Lower leg skin (tissue), 4 donors: ENCODE measurements at regions of chr1 and their contacts with region 1.

Region 1: DNA sequence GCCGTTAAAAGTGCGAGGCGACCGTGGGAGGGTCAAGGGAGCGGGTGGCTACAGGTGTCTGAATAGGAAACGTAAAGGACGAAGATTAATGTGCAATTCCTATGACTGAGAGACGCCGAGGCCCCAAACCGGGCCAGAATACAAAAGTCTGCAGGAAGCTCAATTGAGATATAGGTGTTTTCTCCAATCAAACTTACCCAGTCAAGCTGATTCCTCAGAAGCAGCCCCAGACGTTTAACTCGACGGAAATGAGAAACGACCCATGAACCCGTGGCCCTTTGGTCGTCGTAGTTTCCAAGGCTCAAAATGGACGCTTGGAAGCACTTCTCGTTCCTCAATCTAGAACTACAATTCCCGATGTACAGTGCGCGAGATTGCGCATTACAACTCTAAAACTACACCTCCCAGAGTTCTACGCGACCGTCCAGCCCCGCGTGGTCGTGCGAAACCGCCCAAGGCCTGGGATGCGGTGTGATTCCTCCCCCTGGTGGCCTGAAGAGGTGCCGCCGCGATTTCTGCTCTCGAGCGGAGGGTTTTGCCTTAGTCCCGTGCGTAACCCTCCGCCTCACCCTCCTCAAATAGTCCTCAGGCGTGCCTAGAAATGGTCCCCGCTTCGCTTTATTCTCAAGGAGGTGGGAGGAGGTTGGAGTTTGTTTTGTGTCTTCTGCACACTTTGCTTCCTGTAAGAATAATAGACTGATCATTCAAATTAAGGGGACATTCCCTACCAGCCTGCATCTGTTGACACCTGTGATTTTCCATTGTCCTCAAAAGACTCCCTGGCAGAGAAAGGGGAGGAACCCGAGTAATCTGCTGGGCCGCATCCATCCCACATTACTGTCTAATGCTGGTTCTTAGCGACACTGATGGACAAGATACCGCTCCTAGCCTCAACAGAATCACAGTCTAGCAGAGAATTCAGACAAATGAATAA is at the start of gene PAFAH2:
- DNase-seq: peak; percentile 98 to 99
- H3K4me3 ChIP-seq: peak within 1 kb of the TSS; percentile 34
- CTCF ChIP-seq: peak in 2 of 3 donors; percentile 84 to 98
- POLR2A ChIP-seq: no peak
- total RNA-seq, gene PAFAH2: 11.8 to 23.0 (median 17.1) TPM

Region 2: DNA sequence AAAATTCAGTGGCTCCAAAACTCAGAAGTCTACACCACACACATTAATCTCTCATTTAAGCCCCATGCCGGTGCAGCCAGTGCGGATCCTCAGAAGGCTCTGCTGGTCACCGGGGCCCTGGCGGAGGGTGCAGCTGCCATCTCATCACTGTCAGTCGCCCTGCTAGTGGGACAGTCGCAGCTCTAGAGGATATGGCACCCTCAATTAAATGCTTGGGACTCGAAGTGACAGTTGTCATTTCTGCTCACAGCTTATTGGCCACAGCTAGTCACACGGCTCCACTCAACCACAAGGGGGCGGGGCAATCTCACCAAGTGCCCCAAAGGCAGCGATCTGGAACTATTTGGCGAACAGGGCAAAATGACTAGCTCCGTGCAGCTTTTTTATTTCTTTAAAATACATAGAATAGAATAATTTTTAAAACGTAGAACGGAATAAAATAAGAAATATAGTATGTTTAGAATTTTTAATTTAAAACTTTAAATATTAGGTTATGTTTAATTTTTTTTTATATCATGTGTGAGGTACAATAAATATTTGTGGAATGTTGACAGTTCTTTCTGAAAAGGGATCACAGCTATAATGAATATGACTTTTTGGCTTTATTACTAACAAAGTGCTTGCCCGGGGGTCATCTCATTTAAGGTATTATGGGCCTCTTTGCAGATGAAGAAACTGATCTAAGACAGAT is 389.5 kb before region 1 on chr1:
- intact Hi-C with region 1: no loop called
- DNase-seq: peak; percentile 88 to 97
- H3K4me3 ChIP-seq: no peak overlapping the region
- CTCF ChIP-seq: peak in 1 of 3 donors; percentile 67
- POLR2A ChIP-seq: no peak

Region 3: DNA sequence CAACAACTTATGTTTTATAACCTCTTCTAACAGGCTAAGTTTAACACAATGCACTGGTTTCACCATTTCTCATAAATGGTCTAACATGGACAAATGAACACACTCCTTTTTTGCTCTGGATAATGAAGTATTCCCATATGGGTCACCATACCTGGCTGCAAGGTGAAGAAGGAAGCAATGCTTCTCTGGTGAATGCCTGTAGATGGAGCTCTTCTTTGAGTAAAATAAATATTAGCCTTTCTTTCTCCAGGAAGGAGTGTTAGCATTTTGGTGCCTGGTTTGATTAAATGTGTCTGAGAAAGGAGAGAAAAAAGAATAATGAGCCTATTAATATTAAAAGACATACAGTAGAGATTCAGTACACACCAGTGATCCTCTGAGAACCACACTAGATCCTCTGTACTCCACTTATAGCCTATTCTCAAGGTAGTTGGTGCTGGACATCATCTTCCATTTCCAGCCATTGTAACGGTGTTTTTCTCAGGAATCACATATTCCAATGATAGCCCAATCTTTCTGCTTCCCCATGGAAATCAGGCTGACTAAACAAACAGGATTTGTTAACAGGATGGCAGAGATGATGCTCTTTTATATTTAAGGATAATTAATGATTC is 160.7 kb before region 1 on chr1:
- intact Hi-C with region 1: loop called (anchors 10 kb)
- DNase-seq: no peak
- H3K4me3 ChIP-seq: no peak overlapping the region
- CTCF ChIP-seq: no peak
- POLR2A ChIP-seq: no peak

Region 4: GRCh38 chr1:25895365-25895993 is 102.6 kb before region 1 on chr1:
- intact Hi-C with region 1: loop called (anchors 5 kb)
- DNase-seq: peak; percentile 85 to 97
- H3K4me3 ChIP-seq: no peak overlapping the region
- CTCF ChIP-seq: peak in 2 of 3 donors; percentile 36 to 91
- POLR2A ChIP-seq: no peak

Region 5: DNA sequence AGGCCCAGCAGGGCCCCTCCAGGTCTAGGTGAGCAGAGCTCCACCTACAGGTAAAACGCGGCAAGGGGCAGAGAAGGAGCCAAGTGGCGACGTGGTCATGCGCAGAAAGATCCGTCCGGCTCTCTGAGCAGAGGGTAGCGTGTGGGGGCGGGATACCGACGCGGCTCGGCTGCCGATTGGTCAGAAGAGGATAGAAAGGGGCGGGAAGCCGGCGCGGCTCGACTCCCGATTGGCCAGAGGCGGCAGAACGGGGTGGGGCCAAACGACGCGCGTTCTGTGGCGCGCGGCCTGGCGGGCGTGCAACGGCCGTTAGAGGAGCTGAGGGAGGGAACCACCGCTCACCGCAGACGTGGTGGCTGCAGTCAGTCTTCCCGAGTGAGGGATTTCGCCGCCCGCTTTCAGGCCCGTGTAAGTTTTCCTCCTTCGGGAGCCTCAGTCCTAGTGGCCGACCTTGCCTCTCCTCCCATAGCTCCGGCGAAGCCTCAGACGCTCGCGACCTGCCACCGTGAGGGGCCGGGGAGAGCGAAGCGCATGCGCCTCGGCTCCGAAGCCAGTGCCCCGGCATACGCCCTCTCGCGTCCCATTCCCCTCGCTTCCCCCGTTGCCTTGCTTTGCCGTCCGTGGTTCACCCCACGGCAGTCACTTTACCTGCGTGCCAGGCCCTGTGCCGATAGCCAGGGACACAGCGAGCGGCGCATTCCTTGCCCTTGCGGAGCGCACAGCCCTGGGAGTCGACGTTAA is 236.0 kb after region 1 on chr1 and contains the start of gene CEP85:
- intact Hi-C with region 1: no loop called
- DNase-seq: peak; percentile 97 to 99
- H3K4me3 ChIP-seq: peak within 1 kb of the TSS; percentile 48
- CTCF ChIP-seq: peak in 1 of 3 donors; percentile 43
- POLR2A ChIP-seq: no peak
- total RNA-seq, gene CEP85: 13.0 to 17.2 (median 14.1) TPM

Region 6: DNA sequence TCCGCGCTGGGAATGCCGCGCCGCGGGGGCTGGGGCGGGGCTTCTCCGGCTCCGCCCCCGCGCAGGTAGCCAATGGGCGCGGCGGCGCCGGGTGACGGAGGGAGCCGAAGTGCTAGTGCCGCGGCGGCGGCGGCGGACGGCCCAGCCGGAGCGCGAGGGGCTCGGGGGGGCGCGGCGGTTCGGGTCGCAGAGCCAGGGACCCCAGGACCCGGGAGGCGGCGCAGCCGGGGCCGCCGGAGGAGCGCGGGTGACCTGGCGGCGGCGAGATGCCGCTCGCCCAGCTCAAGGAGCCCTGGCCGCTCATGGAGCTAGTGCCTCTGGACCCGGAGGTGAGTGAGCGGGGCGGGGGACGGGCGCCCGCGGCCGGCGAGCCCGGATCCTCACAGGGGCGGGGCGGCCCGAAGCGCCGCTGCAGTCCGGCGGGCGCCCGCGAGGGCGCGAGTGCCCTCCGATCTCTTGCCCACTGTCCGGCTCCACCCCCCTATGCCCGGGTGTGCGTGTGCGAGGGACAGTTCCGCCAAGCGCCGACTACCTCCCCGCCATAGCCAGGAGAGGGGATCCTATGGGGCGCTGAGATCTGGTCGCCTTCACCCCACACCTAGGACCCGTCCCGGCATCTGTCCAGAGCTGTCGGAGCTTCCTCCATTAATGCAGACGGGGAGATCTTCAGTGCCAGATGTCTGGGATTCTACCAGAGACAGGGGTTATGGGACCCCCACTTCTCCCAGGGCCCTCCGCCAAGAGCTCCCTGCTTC is 531.7 kb after region 1 on chr1 and contains the start of gene RPS6KA1:
- intact Hi-C with region 1: no loop called
- DNase-seq: peak in 1 of 2 donors; percentile 89
- H3K4me3 ChIP-seq: peak within 1 kb of the TSS; percentile 47
- CTCF ChIP-seq: no peak
- POLR2A ChIP-seq: no peak
- total RNA-seq, gene RPS6KA1: 34.1 to 72.6 (median 38.2) TPM

Region 7: GRCh38 chr1:26593385-26593784 is 595.3 kb after region 1 on chr1:
- intact Hi-C with region 1: no loop called
- DNase-seq: peak in 1 of 2 donors; percentile 23
- H3K4me3 ChIP-seq: no peak overlapping the region
- CTCF ChIP-seq: no peak
- POLR2A ChIP-seq: no peak